WTC11 (cell line): ENCODE measurements at regions of chr14 and their contacts with region 1.

Region 1: GRCh38 chr14:45253068-45253753 is at the start of gene MIS18BP1:
- DNase-seq: peak; percentile 95
- ATAC-seq: peak; percentile 98
- H3K4me3 Mint-ChIP-seq: peak within 1 kb of the TSS; percentile 89
- H3K27ac Mint-ChIP-seq: peak within 1 kb of the TSS; percentile 95
- H3K4me1 Mint-ChIP-seq: peaks cover 24% of the 10 kb centered on the region
- H3K27me3 Mint-ChIP-seq: peaks cover 6% of the 10 kb centered on the region; the same call in 1 of the 2 replicates
- CTCF ChIP-seq: peak; percentile 57; the same call in 1 of the 2 replicates
- total RNA-seq, gene MIS18BP1: 60.3 to 65.7 TPM (median 61.3 TPM) in 3 replicates

Region 2: DNA sequence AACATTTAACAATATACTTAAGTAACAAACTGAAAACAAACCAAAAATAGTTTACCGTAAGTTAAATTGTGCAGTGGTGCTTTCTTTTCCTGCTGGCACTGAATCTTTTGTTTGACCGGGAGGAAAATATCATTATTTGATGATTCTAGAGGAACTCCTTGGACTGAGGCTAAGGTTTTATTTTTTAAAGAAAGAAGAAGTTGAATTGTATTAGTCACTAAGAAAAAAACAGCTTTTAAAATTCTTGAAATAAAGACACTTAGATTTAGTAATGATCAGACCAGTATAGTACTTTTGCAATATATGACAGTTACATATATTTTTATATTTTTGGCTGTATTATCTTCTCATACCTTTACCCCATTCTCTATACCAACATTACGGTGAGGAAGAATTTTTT is 10.5 kb before region 1 on chr14:
- CTCF ChIA-PET with region 1: interaction called, 10 read pairs
- POLR2A ChIA-PET with region 1: no interaction called
- DNase-seq: no peak
- ATAC-seq: no peak
- H3K4me3 Mint-ChIP-seq: no peak overlapping the region
- H3K27ac Mint-ChIP-seq: no peak overlapping the region
- H3K4me1 Mint-ChIP-seq: no peaks in the 10 kb centered on the region
- H3K27me3 Mint-ChIP-seq: no peaks in the 10 kb centered on the region
- CTCF ChIP-seq: no peak

Region 3: GRCh38 chr14:45267071-45267470 is 13.9 kb after region 1 on chr14:
- CTCF ChIA-PET with region 1: interaction called, 22 read pairs
- POLR2A ChIA-PET with region 1: interaction called, 5 read pairs
- DNase-seq: no peak
- ATAC-seq: no peak
- H3K4me3 Mint-ChIP-seq: no peak overlapping the region
- H3K27ac Mint-ChIP-seq: no peak overlapping the region
- H3K4me1 Mint-ChIP-seq: no peaks in the 10 kb centered on the region
- H3K27me3 Mint-ChIP-seq: peaks cover 18% of the 10 kb centered on the region
- CTCF ChIP-seq: no peak